ENCODE measurements at regions of chr2 and their contacts with region 1.

Region 1: DNA sequence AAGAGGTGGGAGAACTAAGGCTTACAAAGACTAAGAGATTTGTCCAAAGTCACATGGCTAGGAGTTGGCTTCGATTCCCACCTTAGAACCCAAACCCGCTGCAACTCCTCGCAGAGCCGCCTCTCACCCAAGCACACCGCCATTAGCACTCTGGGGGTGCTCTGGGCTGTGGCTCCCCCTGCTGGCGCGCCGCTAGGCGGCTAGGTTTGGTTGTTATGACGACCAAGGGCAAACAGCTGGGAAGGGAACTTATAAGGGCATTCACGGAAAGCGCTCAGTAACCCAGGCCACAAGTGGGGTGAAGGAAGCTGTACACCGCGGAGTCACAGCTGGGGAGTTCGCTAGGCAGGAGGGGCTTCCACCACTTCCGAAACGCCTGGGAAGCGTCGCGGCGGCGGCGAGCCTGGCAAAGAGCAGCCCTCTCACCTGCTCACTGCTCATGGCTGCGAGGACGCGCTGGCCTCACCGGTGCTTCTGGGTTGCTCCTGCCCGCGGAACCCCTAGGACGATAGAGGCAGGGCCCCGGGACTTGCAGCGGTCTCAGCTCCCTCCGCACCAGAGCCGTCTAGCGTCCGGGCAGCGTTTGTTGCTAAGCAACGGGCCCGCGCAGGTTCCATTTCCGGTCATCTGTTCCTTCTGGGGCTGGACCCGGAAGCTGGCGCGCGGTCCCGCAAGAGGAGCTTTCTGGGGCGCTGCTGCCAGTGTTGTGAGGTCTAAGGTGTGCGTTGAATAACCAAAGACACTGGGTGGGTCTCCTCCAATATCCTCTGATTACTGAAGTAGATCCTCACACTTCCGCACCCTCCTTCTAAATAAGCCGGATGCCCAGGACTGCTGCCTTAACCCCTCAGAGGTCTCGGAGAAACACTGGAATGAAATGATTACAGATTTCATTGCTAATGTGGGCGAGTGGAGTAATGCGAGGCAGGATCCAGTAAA is at the start of gene DNAH7:
- DNase-seq: peak; percentile 59 to 92
- H3K4me3 ChIP-seq: peak within 1 kb of the TSS; percentile 73 to 88
- H3K27ac ChIP-seq: peak within 1 kb of the TSS; percentile 23 to 68
- H3K4me1 ChIP-seq: peaks cover 2 to 3% of the 10 kb centered on the region in 2 donors
- H3K27me3 ChIP-seq: no peaks in the 10 kb centered on the region
- CTCF ChIP-seq: peak in 1 of 3 experiments; percentile 69
- total RNA-seq, gene DNAH7: 0.21 TPM

Region 2: GRCh38 chr2:195533771-195534642 is 534.5 kb before region 1 on chr2:
- intact Hi-C with region 1: loop called (anchors 5 kb)
- DNase-seq: peak; percentile 59 to 92
- H3K4me3 ChIP-seq: peak overlapping the region in 1 of 2 donors; percentile 17
- H3K27ac ChIP-seq: peak overlapping the region; percentile 79 to 82
- H3K4me1 ChIP-seq: peaks cover 7 to 21% of the 10 kb centered on the region in 2 donors
- H3K27me3 ChIP-seq: no peaks in the 10 kb centered on the region
- CTCF ChIP-seq: no peak

Region 3: DNA sequence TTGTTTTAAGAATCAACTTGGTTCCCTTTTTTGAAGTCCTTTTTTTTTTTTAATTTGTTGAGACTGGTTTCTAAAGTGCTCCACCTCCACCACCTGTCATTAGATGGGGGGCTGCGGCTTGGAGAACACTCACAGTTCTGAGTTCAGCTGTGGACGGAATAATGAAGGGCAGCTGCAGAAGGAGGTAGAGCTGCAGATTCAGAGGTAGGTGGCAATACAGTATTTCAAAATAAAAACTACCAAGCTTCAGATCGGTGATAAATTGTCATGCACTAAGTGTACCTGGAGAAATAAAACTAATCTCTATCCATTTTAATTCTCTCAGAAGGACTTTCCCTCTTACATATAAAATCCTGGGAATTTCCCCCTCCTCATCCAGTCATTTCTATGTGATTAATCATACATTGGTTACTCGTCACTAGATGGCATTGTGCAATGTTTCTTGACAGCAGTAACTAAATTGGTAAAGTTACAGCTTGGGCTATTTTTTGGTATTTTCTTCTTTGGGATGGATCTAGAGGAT is 492.6 kb before region 1 on chr2:
- intact Hi-C with region 1: loop called (anchors 5 kb)
- DNase-seq: no peak
- H3K4me3 ChIP-seq: no peak overlapping the region
- H3K27ac ChIP-seq: no peak overlapping the region
- H3K4me1 ChIP-seq: peaks cover 0 to 15% of the 10 kb centered on the region in 2 donors
- H3K27me3 ChIP-seq: no peaks in the 10 kb centered on the region
- CTCF ChIP-seq: no peak

Region 4: GRCh38 chr2:195656859-195657633 is 411.5 kb before region 1 on chr2 and contains the start of gene SLC39A10:
- intact Hi-C with region 1: loop called (anchors 2 kb)
- DNase-seq: peak; percentile 94 to 99
- H3K4me3 ChIP-seq: peak within 1 kb of the TSS; percentile 83 to 89
- H3K27ac ChIP-seq: peak within 1 kb of the TSS; percentile 97 to 98
- H3K4me1 ChIP-seq: peaks cover 0 to 9% of the 10 kb centered on the region in 2 donors
- H3K27me3 ChIP-seq: no peaks in the 10 kb centered on the region
- CTCF ChIP-seq: peak in 1 of 3 experiments; percentile 4
- total RNA-seq, gene SLC39A10: 9.9 TPM

Region 5: DNA sequence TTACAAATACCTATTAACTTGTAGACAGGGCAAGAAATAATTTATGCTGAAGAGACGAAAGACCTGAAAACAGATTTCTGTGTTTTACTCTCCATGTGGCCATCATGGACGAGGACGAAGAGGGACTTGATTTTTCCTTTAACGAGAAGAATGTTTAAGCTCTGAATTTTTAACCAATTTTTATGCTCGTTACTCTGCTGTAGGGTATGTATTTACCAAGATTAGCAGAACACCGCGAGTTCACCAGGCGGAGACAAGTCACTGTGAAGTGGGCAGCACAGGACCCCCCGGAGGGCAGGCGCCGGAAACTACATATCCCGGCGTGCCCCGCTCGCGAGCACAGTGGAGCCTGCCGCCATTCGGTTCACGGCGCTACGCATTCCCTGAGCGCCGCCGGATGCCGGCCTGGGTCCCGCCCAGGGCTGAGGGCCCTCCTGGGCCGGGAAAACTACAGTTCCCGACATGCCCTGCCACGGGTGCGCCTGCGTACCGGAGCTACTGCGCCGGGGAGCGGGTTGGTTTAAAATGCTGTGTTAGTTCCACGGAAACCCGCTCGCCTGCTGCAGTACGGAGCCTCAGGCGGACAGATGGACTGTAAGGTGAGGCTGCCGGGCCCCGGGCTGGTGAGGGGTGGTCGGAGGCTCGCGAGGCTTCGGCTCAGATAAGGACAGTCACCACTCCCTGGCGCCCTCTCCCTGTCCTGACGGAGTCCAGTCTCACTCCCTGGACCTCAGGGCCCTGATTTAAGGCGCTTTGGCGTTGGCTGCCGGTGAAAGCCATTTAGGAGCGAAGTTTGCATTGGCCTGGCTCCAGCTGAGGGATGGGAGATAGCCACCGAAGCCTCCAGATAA is 570.9 kb after region 1 on chr2 and contains the start of gene CCDC150:
- intact Hi-C with region 1: loop called (anchors 5 kb)
- DNase-seq: peak; percentile 75 to 96
- H3K4me3 ChIP-seq: peak within 1 kb of the TSS; percentile 70 to 72
- H3K27ac ChIP-seq: no peak within 1 kb of the TSS
- H3K4me1 ChIP-seq: peaks cover 0 to 5% of the 10 kb centered on the region in 2 donors
- H3K27me3 ChIP-seq: no peaks in the 10 kb centered on the region
- CTCF ChIP-seq: peak; percentile 12 to 51 (median 21)
- total RNA-seq, gene CCDC150: 7.1 TPM

Measured in ascending aorta (tissue), 2 donors.